AG04450 (cell line): ENCODE measurements at regions of chr11 and their contacts with region 1.

Region 1: DNA sequence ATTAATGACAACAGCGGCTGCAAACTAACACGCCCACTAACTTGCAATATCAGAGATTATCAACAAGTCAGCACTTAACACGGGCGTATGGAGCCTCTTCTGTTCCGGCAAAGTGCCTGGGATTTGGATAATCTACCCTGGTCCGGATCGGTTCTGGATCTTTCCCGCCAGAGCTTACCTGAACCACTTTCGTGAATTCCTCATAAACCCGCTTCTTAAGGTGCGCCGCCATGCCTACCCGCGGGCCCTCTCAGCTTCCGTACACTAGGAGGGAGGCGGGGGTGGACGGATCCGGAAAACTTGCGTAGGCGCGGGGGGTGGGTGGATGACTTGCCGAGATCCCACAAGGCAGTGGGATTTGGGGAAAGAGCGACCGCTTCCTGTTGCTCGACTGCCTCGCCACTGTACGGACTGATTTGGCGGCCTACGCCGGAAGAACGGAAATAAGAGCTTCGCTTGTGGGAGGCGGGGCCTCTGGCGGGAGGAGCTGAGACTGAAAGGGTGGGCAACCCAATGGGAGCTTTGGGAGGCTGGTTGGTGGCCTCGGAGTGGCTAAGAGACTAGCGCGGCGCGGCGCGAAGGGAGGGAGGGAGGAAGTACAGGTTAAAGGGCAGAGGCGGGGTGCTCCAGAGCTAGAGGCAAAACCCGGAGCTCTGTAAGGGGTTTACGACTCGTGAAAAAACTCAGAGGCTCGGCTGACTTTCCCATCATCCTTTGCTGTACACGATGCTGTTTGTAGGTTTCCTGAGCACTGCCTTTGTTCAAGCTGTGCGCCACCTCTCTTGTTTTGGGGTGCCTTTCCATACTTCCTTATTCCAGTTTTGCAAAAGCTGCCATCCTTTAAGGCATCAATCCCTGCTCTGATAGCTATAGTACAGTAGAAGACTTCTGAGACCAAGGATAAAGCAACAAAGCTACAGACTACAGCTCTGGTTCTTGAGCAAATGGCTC is at the start of gene INTS4:
- DNase-seq: peak; percentile 99
- H3K4me3 ChIP-seq: peak within 1 kb of the TSS; percentile 95
- H3K27ac ChIP-seq: peak within 1 kb of the TSS; percentile 83
- H3K27me3 ChIP-seq: no peaks in the 10 kb centered on the region
- CTCF ChIP-seq: no peak
- polyA plus RNA-seq, gene INTS4: 28.4 and 29.4 TPM in 2 replicates

Region 2: GRCh38 chr11:77820563-77821348 is 173.9 kb before region 1 on chr11 and contains the starts of genes AAMDC and RSF1:
- CTCF ChIA-PET with region 1: interaction called, 19 read pairs
- POLR2A ChIA-PET with region 1: interaction called, 5 read pairs
- DNase-seq: peak; percentile 98
- H3K4me3 ChIP-seq: peak within 1 kb of the TSS; percentile 94
- H3K27ac ChIP-seq: peak within 1 kb of the TSS; percentile 79
- H3K27me3 ChIP-seq: no peaks in the 10 kb centered on the region
- CTCF ChIP-seq: peak; percentile 82
- polyA plus RNA-seq, gene AAMDC: 45.9 and 57.7 TPM in 2 replicates
- polyA plus RNA-seq, gene RSF1: 26.5 and 26.8 TPM in 2 replicates

Region 3: GRCh38 chr11:77866336-77866735 is 128.4 kb before region 1 on chr11:
- CTCF ChIA-PET with region 1: no interaction called
- POLR2A ChIA-PET with region 1: interaction called, 11 read pairs
- DNase-seq: no peak
- H3K4me3 ChIP-seq: no peak overlapping the region
- H3K27ac ChIP-seq: no peak overlapping the region
- H3K27me3 ChIP-seq: no peaks in the 10 kb centered on the region
- CTCF ChIP-seq: no peak

Region 4: DNA sequence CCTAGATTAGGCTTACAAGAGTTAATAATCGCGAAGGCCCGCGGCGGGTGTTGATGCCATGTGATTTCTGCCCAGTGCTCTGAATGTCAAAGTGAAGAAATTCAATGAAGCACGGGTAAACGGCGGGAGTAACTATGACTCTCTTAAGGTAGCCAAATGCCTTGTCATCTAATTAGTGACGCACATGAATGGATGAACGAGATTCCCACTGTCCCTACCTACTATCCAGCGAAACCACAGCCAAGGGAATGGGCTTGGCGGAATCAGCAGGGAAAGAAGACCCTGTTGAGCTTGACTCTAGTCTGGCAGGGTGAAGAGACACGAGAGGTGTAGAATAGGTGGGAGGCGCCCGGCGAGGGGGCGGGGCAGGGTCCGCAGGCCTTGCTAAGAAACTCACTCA is 108.3 kb before region 1 on chr11:
- CTCF ChIA-PET with region 1: no interaction called
- POLR2A ChIA-PET with region 1: no interaction called
- DNase-seq: no peak
- H3K4me3 ChIP-seq: no peak overlapping the region
- H3K27ac ChIP-seq: no peak overlapping the region
- H3K27me3 ChIP-seq: no peaks in the 10 kb centered on the region
- CTCF ChIP-seq: no peak

Region 5: GRCh38 chr11:77981346-77981947 is 13.2 kb before region 1 on chr11:
- CTCF ChIA-PET with region 1: interaction called, 3 read pairs
- POLR2A ChIA-PET with region 1: interaction called, 12 read pairs
- DNase-seq: no peak
- H3K4me3 ChIP-seq: no peak overlapping the region
- H3K27ac ChIP-seq: no peak overlapping the region
- H3K27me3 ChIP-seq: no peaks in the 10 kb centered on the region
- CTCF ChIP-seq: no peak